Head of caudate nucleus (tissue), 42 donors: ENCODE measurements at regions of chr14 and their contacts with region 1.

Region 1: GRCh38 chr14:75307700-75308379 is 29.2 kb downstream of the FOS start:
- DNase-seq: peak; percentile 77 to 97 (median 92)

Region 2: GRCh38 chr14:75132382-75133086 is 175.3 kb before region 1 on chr14:
- intact Hi-C with region 1: loop called (anchors 5 kb)
- DNase-seq: peak in 21 of 42 donors; percentile 34 to 88 (median 67)

Region 3: DNA sequence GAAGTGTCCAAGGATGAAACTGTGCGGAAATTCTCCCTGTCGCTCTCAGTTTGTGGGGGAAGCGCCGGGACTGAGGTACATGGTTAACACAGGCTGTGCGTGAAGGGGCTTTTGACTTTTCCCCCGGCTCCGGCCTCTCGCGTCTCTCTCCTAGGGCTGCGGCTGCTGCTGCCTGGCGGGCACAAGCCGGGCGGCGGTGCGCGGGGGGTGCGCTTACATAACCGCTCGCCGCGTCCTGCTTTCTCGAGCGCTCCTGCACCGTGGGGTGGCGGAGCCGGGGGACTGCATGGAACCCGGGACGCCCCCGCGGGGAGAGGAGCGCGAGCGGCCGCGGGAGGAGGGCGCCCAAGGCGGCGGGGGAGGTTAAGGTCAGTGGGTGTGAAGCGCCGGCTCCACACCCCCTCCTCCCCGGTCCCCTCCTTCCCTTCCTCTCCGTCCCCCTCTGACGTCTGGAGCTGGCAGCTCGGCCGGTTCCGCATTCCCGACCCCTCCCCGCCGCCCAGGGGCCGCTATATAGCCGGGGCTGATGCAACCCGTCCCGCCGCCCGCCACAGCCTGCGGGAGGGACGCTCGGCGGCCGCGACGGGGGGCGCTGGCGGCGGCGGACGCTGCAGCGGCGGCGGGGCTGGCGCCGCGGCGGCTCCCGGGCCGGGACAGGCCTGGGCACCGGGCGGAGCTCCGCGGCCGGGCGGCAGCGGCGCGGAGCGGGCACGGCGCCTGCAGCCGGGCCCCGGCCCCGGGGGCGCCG is 119.8 kb after region 1 on chr14 and contains the start of gene JDP2:
- intact Hi-C with region 1: loop called (anchors 2 kb)
- DNase-seq: peak; percentile 67 to 94 (median 84)

Region 4: DNA sequence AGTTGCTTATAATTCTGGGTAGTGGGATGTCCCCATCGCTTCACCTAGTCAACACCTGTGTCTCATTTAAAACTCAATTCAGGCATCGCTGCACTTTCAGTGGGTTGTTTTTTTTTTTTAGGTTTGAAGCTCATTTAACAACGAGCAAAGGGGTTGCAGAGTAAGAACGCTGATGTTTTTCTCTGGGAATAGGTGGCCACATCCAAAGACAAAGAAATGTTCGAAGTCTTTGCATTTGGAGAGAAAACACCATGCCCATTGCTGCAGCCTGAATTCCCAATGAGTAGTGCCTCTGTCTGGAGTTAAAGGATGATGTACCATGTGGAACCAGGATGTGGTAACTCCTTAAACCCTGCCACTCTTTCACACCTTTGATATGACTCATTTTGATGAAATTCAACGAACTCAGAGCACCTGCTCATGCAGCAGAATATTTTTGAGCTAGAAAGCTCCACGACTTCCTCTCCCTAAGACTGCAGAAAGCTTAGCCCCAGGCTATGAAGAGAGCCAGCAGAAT is 179.4 kb after region 1 on chr14:
- intact Hi-C with region 1: loop called (anchors 2 kb)
- DNase-seq: no peak